ENCODE measurements at regions of chr5 and their contacts with region 1.

Region 1: DNA sequence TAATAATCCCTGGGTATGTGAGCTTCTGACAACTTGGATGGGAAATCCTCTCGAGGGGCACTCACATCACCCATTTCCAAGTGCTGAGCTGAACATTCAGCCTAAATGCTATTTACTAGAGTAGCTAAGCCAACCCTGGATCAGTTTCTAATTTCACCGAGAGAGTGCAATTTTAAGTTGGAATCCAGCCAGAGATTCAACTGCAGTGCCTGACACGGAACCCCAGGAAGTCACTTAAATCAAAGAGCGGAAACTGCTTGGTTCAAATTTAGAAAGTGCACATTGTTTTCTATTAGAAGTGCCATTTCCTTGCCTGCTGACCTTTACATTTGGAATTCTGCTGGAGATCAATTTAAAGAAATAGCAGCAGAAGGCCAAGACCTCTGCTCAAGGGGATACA is 8.8 kb downstream of the SPRY4 start:
- DNase-seq: peak; percentile 82
- H3K4me3 ChIP-seq: no peak overlapping the region
- H3K27ac ChIP-seq: peak overlapping the region; percentile 57
- H3K4me1 ChIP-seq: peaks cover 68% of the 10 kb centered on the region
- H3K27me3 ChIP-seq: no peaks in the 10 kb centered on the region
- CTCF ChIP-seq: no peak
- POLR2A ChIP-seq: no peak

Region 2: GRCh38 chr5:141636413-141637122 is 679.5 kb before region 1 on chr5 and contains the starts of genes HDAC3 and RELL2:
- CTCF ChIA-PET with region 1: no interaction called
- POLR2A ChIA-PET with region 1: no interaction called
- dilution Hi-C with region 1: no loop called
- intact Hi-C with region 1: no loop called
- DNase-seq: peak; percentile 95
- H3K4me3 ChIP-seq: peak within 1 kb of the TSS; percentile 75 to 82 (median 77)
- H3K27ac ChIP-seq: peak within 1 kb of the TSS; percentile 38
- H3K4me1 ChIP-seq: peaks cover 21% of the 10 kb centered on the region
- H3K27me3 ChIP-seq: no peaks in the 10 kb centered on the region
- CTCF ChIP-seq: no peak
- POLR2A ChIP-seq: peak; percentile 88
- total RNA-seq, gene HDAC3: 58.5 and 60.2 TPM in 2 replicates
- total RNA-seq, gene RELL2: 3.1 and 3.6 TPM in 2 replicates

Region 3: DNA sequence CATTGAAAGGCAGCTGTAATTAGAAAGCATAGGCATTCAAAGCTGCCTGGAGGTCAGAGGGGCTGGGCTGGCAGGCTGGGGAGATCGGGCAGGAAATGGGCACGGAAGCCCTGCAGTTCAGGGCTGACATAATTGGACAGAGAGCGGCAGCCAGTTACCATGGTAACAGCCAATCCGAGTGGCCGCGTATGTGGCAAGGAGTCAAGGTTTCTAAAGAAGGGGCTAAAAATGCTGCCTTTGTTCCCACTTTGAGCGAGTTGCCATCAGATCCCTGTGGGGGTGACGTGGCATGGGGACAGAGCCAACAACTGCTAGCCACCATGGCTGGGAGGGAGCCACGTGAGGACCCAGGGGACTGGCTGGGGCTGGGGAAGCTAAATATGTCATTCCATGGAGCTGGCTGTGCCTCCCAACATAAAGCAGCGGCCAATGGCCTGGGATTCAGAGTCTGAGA is 252.1 kb before region 1 on chr5:
- CTCF ChIA-PET with region 1: no interaction called
- POLR2A ChIA-PET with region 1: no interaction called
- dilution Hi-C with region 1: no loop called
- intact Hi-C with region 1: no loop called
- DNase-seq: peak; percentile 60
- H3K4me3 ChIP-seq: no peak overlapping the region
- H3K27ac ChIP-seq: no peak overlapping the region
- H3K4me1 ChIP-seq: peaks cover 9% of the 10 kb centered on the region
- H3K27me3 ChIP-seq: peaks cover 0 to 3% of the 10 kb centered on the region in 2 experiments
- CTCF ChIP-seq: no peak
- POLR2A ChIP-seq: no peak

Region 4: DNA sequence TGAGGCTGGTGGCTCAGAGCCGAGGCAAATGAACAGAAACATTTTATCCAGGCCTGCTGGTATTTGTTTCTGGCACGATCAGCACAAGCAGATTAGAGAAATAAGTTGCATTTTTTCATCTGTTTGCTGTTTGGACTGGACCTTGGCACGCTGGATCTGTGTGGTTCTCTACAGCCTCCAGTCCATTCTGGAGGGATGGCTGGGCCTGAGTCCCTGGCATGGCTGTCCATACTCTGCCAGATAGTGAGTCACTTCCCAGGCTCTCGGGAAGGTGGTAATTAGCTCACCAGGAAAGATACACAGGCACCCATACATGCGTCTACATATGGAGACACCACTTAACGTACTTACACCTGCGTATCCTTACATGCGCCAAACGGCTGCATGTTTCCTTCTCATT is 69.8 kb before region 1 on chr5:
- CTCF ChIA-PET with region 1: no interaction called
- POLR2A ChIA-PET with region 1: no interaction called
- dilution Hi-C with region 1: no loop called
- intact Hi-C with region 1: loop called (anchors 2 kb)
- DNase-seq: peak; percentile 23
- H3K4me3 ChIP-seq: no peak overlapping the region
- H3K27ac ChIP-seq: peak overlapping the region; percentile 66
- H3K4me1 ChIP-seq: peaks cover 13% of the 10 kb centered on the region
- H3K27me3 ChIP-seq: no peaks in the 10 kb centered on the region
- CTCF ChIP-seq: no peak
- POLR2A ChIP-seq: no peak

Region 5: DNA sequence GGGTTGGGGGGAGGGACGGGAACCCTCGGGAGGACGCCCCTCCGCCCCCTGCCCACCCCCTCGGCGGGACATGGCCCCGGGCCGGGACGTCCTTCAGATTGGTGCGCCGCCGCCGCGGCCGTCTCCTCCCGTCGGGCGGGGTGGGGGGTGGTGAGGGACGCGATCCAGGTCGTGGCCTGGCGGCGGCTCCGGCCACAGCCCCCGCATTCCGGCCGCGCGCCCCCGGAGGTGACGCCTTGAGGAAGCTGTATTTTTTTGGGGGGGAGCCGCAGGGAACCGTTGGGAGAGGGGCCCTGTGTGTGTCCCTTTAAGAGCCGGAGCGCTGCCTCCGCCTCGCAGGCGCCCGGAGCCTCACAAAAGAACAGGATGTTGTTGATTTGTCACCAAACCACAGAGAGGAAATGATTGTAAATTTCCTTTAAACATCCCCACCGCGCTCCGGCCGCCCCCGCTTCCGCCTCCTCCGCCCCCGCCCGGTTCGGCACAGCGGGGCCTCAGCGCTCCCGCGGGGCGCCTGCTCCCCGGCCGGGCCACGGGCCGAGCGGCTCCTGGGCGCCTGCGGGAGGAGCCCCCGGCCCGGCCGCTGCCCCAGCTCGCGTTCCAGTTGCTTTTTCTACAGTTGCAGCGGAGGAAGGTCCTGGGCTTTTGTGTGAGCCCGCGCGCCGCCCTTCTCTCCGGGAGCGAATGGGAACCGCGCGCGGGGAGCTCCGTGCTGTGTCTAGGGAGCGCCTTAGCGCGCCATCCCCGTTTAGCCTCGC is 40.8 kb after region 1 on chr5:
- CTCF ChIA-PET with region 1: interaction called, 5 read pairs
- POLR2A ChIA-PET with region 1: interaction called, 5 read pairs
- dilution Hi-C with region 1: no loop called
- intact Hi-C with region 1: loop called (anchors 2 kb)
- DNase-seq: peak; percentile 94
- H3K4me3 ChIP-seq: peak overlapping the region in 1 of 3 experiments; percentile 54
- H3K27ac ChIP-seq: peak overlapping the region; percentile 74
- H3K4me1 ChIP-seq: peaks cover 31% of the 10 kb centered on the region
- H3K27me3 ChIP-seq: no peaks in the 10 kb centered on the region
- CTCF ChIP-seq: no peak
- POLR2A ChIP-seq: peak; percentile 47

Region 6: DNA sequence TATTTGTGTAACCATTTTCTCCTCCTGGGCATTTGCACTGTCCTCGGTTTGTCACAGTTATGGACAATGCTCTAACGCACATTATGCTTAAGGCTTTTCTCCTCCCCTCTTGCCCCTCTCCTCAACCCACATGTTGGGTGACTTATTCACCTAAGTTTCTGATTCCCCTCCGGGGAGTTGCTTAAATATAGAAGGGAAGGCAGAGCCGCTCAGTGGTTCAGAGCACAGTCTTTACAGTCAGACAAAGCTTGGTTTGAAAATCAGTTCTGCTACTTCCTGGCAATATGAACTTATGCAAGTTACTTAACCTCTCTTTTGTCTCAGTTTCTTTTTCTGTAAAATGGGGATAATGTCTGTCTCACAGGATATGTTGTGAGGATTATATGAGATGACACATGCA is 50.0 kb after region 1 on chr5:
- CTCF ChIA-PET with region 1: no interaction called
- POLR2A ChIA-PET with region 1: interaction called, 15 read pairs
- dilution Hi-C with region 1: no loop called
- intact Hi-C with region 1: no loop called
- DNase-seq: no peak
- H3K4me3 ChIP-seq: no peak overlapping the region
- H3K27ac ChIP-seq: no peak overlapping the region
- H3K4me1 ChIP-seq: peaks cover 18% of the 10 kb centered on the region
- H3K27me3 ChIP-seq: no peaks in the 10 kb centered on the region
- CTCF ChIP-seq: no peak
- POLR2A ChIP-seq: no peak

Region 7: DNA sequence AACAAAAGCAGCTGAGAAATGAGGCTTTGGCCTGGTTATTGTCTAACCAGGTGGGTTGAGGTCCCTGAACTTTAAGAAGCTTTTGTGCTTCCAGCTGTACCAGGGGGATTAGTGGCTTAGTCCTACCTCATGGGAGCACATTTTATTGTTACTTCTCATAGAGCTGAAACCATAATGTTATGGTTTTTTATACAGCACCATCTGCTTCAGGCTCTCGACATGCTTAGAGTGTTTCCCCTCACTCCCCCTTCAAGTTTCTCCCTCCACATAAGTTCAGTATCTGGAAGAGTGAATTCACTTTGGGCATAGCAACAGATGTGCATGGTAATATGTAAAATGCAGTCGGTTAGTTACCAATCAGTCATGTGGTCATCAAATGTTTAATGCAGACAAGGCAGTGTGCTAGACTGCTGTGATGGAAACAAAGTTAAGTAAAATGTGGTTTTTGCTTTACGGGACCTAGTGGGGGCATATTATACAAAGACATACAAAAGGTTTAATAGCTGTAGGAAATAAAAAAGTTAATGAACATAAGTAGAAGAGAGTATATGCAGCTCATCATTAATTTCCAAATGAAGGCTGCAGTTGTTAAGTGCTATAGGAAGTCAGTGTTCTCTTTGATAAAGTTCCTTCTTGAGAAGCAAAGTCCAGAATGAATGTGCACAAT is 104.6 kb after region 1 on chr5:
- CTCF ChIA-PET with region 1: no interaction called
- POLR2A ChIA-PET with region 1: no interaction called
- dilution Hi-C with region 1: no loop called
- intact Hi-C with region 1: no loop called
- DNase-seq: no peak
- H3K4me3 ChIP-seq: no peak overlapping the region
- H3K27ac ChIP-seq: no peak overlapping the region
- H3K4me1 ChIP-seq: peaks cover 33% of the 10 kb centered on the region
- H3K27me3 ChIP-seq: no peaks in the 10 kb centered on the region
- CTCF ChIP-seq: no peak
- POLR2A ChIP-seq: no peak

Measured in endothelial cell of umbilical vein (primary cell).